K562 (cell line): ENCODE measurements at regions of chr1 and their contacts with region 1.

Region 1: DNA sequence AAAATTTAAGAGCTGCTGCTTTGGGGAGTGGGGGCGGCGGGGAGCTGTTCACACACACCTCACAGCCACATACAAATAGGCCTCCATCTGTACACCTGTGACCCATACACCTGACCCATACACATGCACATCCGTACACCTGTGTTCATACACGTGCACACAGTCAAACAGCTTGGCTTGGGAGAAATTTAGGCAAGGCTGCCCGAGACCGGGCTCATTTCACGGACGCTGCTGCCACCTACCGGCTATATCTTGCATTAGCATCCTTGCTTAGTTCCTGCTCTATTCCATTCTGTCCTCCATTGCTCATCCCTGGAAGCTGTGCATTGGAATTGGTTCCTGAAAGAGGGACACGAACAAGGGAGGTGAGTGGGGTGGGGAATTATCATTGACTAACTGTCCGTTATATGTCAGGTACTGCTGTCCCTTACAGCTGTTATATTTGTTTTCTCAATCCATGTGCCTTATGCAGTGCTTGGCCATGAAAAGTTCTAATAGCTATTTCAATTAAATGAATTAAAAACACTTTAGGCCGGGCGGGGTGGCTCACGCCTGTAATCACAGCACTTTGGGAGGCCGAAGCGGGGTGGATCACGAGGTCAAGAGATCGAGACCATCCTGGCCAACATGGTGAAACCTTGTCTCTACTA is 37.1 kb upstream of the EPB41 start:
- DNase-seq: peak; percentile 81 to 92 (median 82)
- ATAC-seq: peak; percentile 85
- H3K4me3 ChIP-seq: no peak overlapping the region
- H3K27ac ChIP-seq: no peak overlapping the region
- H3K4me1 ChIP-seq: peaks cover 21 to 22% of the 10 kb centered on the region in 2 experiments
- H3K27me3 ChIP-seq: no peaks in the 10 kb centered on the region
- CTCF ChIP-seq: peak; percentile 94 to 99 (median 97)
- EP300 ChIP-seq: no peak
- POLR2A ChIP-seq: no peak
- RAD21 ChIP-seq: peak; percentile 95 to 98

Region 2: GRCh38 chr1:28359592-28360239 is 517.5 kb before region 1 on chr1:
- CTCF ChIA-PET with region 1: interaction called, 3 read pairs
- POLR2A ChIA-PET with region 1: no interaction called
- in situ Hi-C with region 1: no loop called
- intact Hi-C with region 1: loop called (anchors 2 kb)
- DNase-seq: peak; percentile 63 to 84 (median 68)
- ATAC-seq: peak; percentile 88
- H3K4me3 ChIP-seq: no peak overlapping the region
- H3K27ac ChIP-seq: no peak overlapping the region
- H3K4me1 ChIP-seq: peaks cover 6 to 7% of the 10 kb centered on the region in 2 experiments; a peak in 3 of 5 replicates
- H3K27me3 ChIP-seq: no peaks in the 10 kb centered on the region
- CTCF ChIP-seq: peak; percentile 65 to 86 (median 77)
- EP300 ChIP-seq: peak; percentile 33
- POLR2A ChIP-seq: no peak
- RAD21 ChIP-seq: peak; percentile 72 to 83

Region 3: DNA sequence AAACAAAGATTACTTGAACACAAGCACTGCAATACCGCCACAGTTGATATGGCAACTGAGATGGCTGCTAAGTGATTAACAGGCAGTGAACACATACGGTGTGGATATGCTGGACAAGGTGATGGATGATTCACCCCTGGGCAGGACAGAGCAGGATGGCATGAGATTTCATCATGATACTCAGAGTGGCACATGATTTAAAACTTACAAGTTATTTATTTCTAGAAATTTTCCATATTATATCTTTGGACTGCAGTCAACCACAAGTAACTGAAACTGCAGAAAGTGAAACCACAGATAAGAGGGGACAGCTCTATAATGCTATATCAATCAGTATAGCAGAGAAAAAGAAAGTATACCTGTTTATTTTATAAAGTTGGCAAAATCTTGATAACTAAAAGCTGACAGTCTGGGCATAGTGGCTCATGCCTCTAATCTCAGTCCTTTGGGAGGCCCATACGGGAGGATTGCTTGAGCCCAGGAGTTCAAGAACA is 459.8 kb before region 1 on chr1:
- CTCF ChIA-PET with region 1: no interaction called
- POLR2A ChIA-PET with region 1: no interaction called
- in situ Hi-C with region 1: no loop called
- intact Hi-C with region 1: loop called (anchors 2 kb)
- DNase-seq: peak in 2 of 4 experiments; percentile 39 to 69
- ATAC-seq: peak; percentile 74
- H3K4me3 ChIP-seq: 0 out of 2 replicates have a peak overlapping the region, but pooled peaks have one; percentile 6
- H3K27ac ChIP-seq: peak overlapping the region; percentile 18
- H3K4me1 ChIP-seq: peaks cover 22 to 47% of the 10 kb centered on the region in 2 experiments
- H3K27me3 ChIP-seq: no peaks in the 10 kb centered on the region
- CTCF ChIP-seq: no peak
- EP300 ChIP-seq: peak; percentile 90
- POLR2A ChIP-seq: no peak
- RAD21 ChIP-seq: no peak

Region 4: GRCh38 chr1:28865997-28866650 is 11.1 kb before region 1 on chr1:
- CTCF ChIA-PET with region 1: no interaction called
- POLR2A ChIA-PET with region 1: interaction called, 12 read pairs
- in situ Hi-C with region 1: no loop called
- intact Hi-C with region 1: no loop called
- DNase-seq: no peak
- ATAC-seq: no peak; the same call in 2 of the 3 replicates
- H3K4me3 ChIP-seq: no peak overlapping the region
- H3K27ac ChIP-seq: no peak overlapping the region
- H3K4me1 ChIP-seq: peaks cover 0 to 11% of the 10 kb centered on the region in 2 experiments; a peak in 2 of 5 replicates
- H3K27me3 ChIP-seq: peaks cover 37 to 70% of the 10 kb centered on the region in 2 experiments
- CTCF ChIP-seq: no peak
- EP300 ChIP-seq: no peak
- POLR2A ChIP-seq: no peak
- RAD21 ChIP-seq: no peak

Region 5: GRCh38 chr1:29166291-29166878 is 289.1 kb after region 1 on chr1:
- CTCF ChIA-PET with region 1: no interaction called
- POLR2A ChIA-PET with region 1: no interaction called
- in situ Hi-C with region 1: no loop called
- intact Hi-C with region 1: no loop called
- DNase-seq: no peak
- ATAC-seq: 0 out of 3 replicates have a peak, but pooled peaks have one; percentile 4
- H3K4me3 ChIP-seq: no peak overlapping the region
- H3K27ac ChIP-seq: no peak overlapping the region
- H3K4me1 ChIP-seq: peaks cover 0 to 4% of the 10 kb centered on the region in 2 experiments; a peak in 3 of 5 replicates
- H3K27me3 ChIP-seq: no peaks in the 10 kb centered on the region
- CTCF ChIP-seq: no peak
- EP300 ChIP-seq: no peak
- POLR2A ChIP-seq: no peak
- RAD21 ChIP-seq: no peak